Left lung (tissue), 14 donors: ENCODE measurements at regions of chr15 and their contacts with region 1.

Region 1: GRCh38 chr15:85361323-85361722 is 19.1 kb upstream of the AKAP13 start:
- DNase-seq: no peak
- ATAC-seq: no peak
- H3K4me3 ChIP-seq: no peak overlapping the region
- H3K27ac ChIP-seq: no peak overlapping the region
- H3K4me1 ChIP-seq: peaks cover 11 to 15% of the 10 kb centered on the region in 2 donors
- H3K27me3 ChIP-seq: no peaks in the 10 kb centered on the region
- CTCF ChIP-seq: no peak

Region 2: DNA sequence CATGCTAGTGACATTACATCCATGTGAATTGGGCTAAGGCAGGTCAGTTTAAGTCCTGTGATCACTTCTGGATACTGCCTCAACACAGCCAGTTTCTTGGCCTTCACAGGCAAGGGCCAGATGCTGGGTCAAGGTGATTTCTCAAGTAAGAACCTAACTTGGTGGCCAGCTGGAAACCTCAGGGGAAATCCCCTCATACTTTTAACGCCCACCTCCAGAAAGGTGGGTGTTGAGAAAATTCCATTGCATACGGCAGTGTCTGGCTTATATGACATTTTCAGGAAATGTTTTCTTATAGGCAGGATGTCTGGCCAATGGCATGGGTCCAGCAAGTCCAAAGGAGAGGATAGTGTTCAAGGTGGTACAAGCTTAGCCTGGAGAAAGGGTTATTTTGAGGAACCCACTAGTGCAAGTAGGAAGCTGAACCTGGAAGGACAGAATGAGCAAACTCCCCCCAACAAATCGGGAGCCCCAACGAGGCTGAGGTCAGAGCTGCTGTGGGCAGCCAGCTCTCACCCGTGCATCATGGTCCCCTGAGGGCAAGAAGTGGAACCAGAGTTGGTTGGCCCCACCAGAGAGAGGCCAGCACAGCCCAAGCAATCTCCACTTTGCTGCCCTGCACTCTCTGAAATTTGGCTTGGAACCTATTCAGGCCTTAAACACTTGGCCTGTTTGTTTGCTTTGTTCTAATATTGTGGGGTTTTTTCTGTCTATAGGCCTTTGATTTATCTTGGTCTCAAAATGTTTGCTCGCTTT is 244.2 kb before region 1 on chr15:
- intact Hi-C with region 1: no loop called
- DNase-seq: no peak
- ATAC-seq: no peak
- H3K4me3 ChIP-seq: no peak overlapping the region
- H3K27ac ChIP-seq: no peak overlapping the region
- H3K4me1 ChIP-seq: no peaks in the 10 kb centered on the region
- H3K27me3 ChIP-seq: no peaks in the 10 kb centered on the region
- CTCF ChIP-seq: no peak

Region 3: DNA sequence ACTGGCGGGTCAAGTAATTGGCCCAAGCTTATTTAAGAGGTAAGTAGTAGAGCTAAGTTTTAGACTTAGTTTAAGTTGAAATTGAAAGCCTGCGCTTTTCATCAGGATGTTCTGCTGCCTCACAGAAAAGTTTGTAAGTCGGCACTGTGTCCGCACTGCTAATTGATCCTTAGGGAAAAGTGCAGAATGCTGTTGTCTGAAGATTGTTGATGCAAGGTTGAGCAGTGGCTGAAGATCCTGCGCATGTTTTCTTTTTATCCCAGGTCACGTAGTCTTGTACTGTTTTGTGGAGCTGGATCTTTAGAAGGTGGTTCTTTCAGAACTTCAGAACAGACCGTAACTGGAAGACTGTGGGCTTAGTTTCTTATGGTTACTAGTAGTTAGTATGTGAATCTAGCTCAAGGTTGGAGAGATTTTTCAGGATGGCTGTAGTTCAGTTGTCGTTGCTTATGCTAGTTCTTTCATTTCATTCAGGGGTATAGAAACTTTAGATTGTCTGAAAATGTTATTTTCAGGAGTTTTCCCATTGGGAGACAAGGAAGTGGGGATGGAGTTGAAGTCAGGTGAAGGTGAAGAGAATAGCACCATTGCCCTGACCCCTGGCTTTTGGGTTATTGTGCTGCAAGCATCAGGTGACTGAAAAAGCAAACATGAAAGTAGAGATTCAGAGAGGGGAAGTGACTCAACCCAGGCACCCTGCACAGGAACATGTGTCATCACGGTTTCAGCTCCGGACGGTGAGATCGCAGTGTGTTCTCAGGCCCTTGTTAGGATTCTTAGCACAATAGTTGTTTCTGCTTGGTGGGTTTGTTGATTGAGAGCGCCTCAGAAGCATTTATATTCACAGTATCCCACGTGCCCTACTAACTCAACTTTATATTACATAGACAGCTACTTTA is 51.9 kb after region 1 on chr15:
- intact Hi-C with region 1: loop called in 1 of 2 experiments (anchors 10 kb)
- DNase-seq: peak in 2 of 4 donors; percentile 62 to 69
- ATAC-seq: peak; percentile 94
- H3K4me3 ChIP-seq: no peak overlapping the region
- H3K27ac ChIP-seq: peak overlapping the region; percentile 39 to 50
- H3K4me1 ChIP-seq: peaks cover 15 to 48% of the 10 kb centered on the region in 2 donors
- H3K27me3 ChIP-seq: no peaks in the 10 kb centered on the region
- CTCF ChIP-seq: no peak